ENCODE measurements at regions of chr17 and their contacts with region 1.

Region 1: DNA sequence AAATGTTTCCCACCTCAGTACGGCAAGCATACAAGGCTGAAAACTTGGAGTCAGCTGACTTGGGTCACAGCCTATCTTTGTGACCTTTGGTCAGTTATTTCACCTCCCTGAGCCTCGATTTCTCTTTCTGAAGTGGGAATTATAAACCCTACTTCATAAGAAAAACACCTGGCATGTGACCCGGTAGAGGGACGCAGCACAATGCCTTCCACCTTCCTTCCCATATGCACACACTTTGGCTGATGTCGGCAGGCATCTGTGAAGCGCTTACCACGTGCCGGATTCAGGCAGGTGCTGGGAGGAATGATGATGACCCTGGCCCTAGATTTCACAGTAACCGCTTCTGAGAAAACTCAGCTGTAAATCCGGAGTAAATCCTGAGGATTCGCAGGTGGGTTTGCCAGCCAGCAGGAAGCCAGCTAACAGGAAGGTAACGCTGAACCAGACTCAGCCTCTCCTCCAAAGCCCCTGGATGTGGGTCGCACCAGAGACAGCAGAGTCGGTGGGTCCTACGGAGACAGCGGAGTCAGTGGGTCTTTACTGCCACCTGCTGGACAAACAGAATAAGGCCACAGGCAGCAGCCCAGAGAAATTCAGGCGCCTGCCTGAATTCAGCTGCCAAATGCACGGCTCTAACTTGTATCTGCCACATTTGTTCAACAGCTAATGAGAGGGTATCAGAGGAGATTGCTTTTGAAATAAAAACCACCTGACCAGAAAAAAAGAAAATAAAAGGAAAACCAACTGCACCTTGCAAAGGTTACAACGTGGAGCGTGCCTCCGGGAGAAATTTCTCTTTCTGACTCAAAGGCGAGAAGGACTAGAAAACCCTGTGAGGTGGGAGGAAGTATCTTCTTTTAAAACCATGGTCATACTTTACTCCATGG is 16.6 kb downstream of the COPRS start:
- DNase-seq: peak; percentile 27
- ATAC-seq: peak; percentile 96
- H3K4me3 ChIP-seq: no peak overlapping the region; a peak in 1 of 4 replicates
- H3K27ac ChIP-seq: no peak overlapping the region
- H3K4me1 ChIP-seq: peaks cover 0 to 4% of the 10 kb centered on the region in 2 experiments; a peak in 1 of 4 replicates
- H3K27me3 ChIP-seq: no peaks in the 10 kb centered on the region
- CTCF ChIP-seq: peak; percentile 90 to 95 (median 94)
- POLR2A ChIP-seq: no peak
- RAD21 ChIP-seq: peak; percentile 98

Region 2: GRCh38 chr17:31388770-31389661 is 453.4 kb before region 1 on chr17:
- CTCF ChIA-PET with region 1: interaction called, 10 read pairs
- POLR2A ChIA-PET with region 1: no interaction called
- RAD21 ChIA-PET with region 1: no interaction called
- intact Hi-C with region 1: loop called (anchors 5 kb)
- DNase-seq: no peak
- ATAC-seq: peak; percentile 89
- H3K4me3 ChIP-seq: no peak overlapping the region
- H3K27ac ChIP-seq: no peak overlapping the region
- H3K4me1 ChIP-seq: no peaks in the 10 kb centered on the region
- H3K27me3 ChIP-seq: no peaks in the 10 kb centered on the region
- CTCF ChIP-seq: peak; percentile 69 to 89 (median 78); a peak in 5 of 6 replicates
- POLR2A ChIP-seq: no peak
- RAD21 ChIP-seq: peak; percentile 72

Region 3: DNA sequence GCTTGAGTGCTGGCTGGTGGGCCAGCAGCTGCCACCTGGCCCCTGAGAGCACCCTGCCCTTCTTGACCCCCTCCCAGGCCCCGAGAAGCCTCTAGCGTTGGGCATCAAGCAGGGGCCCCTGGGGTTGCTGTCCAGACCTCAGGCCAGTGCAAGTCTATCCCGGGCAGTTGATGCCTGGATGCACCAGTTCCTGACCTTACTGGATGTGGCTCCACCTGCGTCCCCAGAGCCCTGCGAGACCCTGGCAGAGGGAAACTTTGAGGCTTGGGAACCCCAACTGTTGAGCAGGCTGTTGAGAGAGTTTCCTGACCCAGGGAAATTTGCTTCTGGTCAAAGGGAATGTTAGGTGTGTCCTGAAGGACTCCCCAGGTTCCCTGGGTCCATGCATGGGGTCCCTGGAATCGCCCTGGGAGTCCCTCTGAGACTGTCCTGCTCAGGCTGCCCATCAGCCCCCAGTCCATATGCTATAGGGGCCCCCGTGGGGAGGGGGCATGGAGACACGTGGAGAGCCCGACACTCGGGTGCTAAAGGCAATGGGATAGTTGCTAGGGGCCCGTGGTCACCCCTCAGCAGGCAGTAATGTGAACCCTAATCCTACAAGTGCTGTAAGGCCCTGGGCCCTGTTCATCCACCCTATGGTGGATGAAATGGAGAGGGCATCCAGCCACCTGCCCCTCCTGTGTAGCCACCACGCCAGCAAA is 404.6 kb before region 1 on chr17:
- CTCF ChIA-PET with region 1: interaction called, 5 read pairs
- POLR2A ChIA-PET with region 1: no interaction called
- RAD21 ChIA-PET with region 1: no interaction called
- intact Hi-C with region 1: loop called (anchors 1 kb)
- DNase-seq: no peak
- ATAC-seq: no peak; the same call in 1 of the 2 replicates
- H3K4me3 ChIP-seq: no peak overlapping the region
- H3K27ac ChIP-seq: no peak overlapping the region
- H3K4me1 ChIP-seq: peaks cover 0 to 5% of the 10 kb centered on the region in 2 experiments; a peak in 1 of 4 replicates
- H3K27me3 ChIP-seq: no peaks in the 10 kb centered on the region
- CTCF ChIP-seq: no peak
- POLR2A ChIP-seq: no peak
- RAD21 ChIP-seq: no peak

Region 4: GRCh38 chr17:31524926-31525800 is 317.3 kb before region 1 on chr17:
- CTCF ChIA-PET with region 1: interaction called, 4 read pairs
- POLR2A ChIA-PET with region 1: no interaction called
- RAD21 ChIA-PET with region 1: no interaction called
- intact Hi-C with region 1: loop called (anchors 1 kb)
- DNase-seq: peak; percentile 49
- ATAC-seq: peak; percentile 95
- H3K4me3 ChIP-seq: no peak overlapping the region
- H3K27ac ChIP-seq: no peak overlapping the region
- H3K4me1 ChIP-seq: peaks cover 0 to 10% of the 10 kb centered on the region in 2 experiments; a peak in 2 of 4 replicates
- H3K27me3 ChIP-seq: no peaks in the 10 kb centered on the region
- CTCF ChIP-seq: peak; percentile 94 to 98 (median 96)
- POLR2A ChIP-seq: no peak
- RAD21 ChIP-seq: peak; percentile 95

Region 5: DNA sequence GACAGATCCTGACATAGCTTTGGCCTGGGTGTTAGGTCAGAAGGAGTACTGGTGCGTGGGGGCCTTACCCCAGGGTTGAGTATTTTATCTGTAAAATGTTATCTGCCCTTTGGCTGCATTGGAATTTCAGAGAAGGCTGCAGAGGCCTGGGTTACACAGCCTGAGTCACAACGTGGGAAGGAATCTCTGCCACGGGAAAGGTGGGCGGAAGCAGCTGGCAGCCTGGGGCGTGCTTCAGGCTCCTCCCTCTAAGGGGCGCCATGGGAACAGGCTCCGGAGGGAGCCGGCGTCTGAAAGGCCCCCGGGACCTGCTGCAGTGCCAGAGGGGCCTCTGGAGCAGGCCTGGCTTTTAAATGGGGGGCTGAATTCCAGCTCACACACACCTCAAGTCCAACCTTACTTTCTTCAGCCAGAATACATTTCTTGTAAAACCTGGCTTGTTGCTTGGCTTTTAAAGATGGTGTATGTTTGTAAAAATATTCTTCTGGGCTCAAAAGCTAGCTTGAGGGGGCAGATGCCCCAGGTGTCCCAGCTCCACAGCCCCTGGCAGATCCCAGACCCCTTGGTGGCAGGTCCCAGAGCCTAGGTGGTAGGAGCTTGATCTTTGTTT is 308.8 kb before region 1 on chr17:
- CTCF ChIA-PET with region 1: interaction called, 32 read pairs
- POLR2A ChIA-PET with region 1: no interaction called
- RAD21 ChIA-PET with region 1: interaction called, 3 to 4 read pairs
- intact Hi-C with region 1: no loop called
- DNase-seq: peak; percentile 38
- ATAC-seq: peak; percentile 95
- H3K4me3 ChIP-seq: peak overlapping the region in 1 of 2 experiments; percentile 22; a peak in 1 of 4 replicates
- H3K27ac ChIP-seq: 0 out of 2 replicates have a peak overlapping the region, but pooled peaks have one; percentile 22
- H3K4me1 ChIP-seq: peaks cover 16 to 18% of the 10 kb centered on the region in 2 experiments
- H3K27me3 ChIP-seq: no peaks in the 10 kb centered on the region
- CTCF ChIP-seq: peak in 2 of 3 experiments; percentile 44 to 59; a peak in 3 of 6 replicates
- POLR2A ChIP-seq: no peak
- RAD21 ChIP-seq: peak; percentile 84

Region 6: GRCh38 chr17:31558748-31559644 is 283.4 kb before region 1 on chr17:
- CTCF ChIA-PET with region 1: interaction called, 28 read pairs
- POLR2A ChIA-PET with region 1: interaction called, 3 read pairs
- RAD21 ChIA-PET with region 1: no interaction called
- intact Hi-C with region 1: loop called (anchors 1 kb)
- DNase-seq: peak; percentile 42
- ATAC-seq: peak; percentile 96
- H3K4me3 ChIP-seq: peak overlapping the region; percentile 37 to 53
- H3K27ac ChIP-seq: peak overlapping the region; percentile 64; the same call in 1 of the 2 replicates
- H3K4me1 ChIP-seq: peaks cover 0 to 8% of the 10 kb centered on the region in 2 experiments; a peak in 3 of 4 replicates
- H3K27me3 ChIP-seq: no peaks in the 10 kb centered on the region
- CTCF ChIP-seq: peak; percentile 54 to 79 (median 58)
- POLR2A ChIP-seq: no peak
- RAD21 ChIP-seq: peak; percentile 74

Region 7: GRCh38 chr17:31919802-31920525 is 77.5 kb after region 1 on chr17:
- CTCF ChIA-PET with region 1: no interaction called
- POLR2A ChIA-PET with region 1: no interaction called
- RAD21 ChIA-PET with region 1: no interaction called
- intact Hi-C with region 1: no loop called
- DNase-seq: no peak
- ATAC-seq: no peak
- H3K4me3 ChIP-seq: no peak overlapping the region
- H3K27ac ChIP-seq: no peak overlapping the region
- H3K4me1 ChIP-seq: no peaks in the 10 kb centered on the region
- H3K27me3 ChIP-seq: no peaks in the 10 kb centered on the region
- CTCF ChIP-seq: no peak
- POLR2A ChIP-seq: no peak
- RAD21 ChIP-seq: no peak

Measured in HCT116 (cell line).